WTC11 (cell line): ENCODE measurements at regions of chr1 and their contacts with region 1.

Region 1: DNA sequence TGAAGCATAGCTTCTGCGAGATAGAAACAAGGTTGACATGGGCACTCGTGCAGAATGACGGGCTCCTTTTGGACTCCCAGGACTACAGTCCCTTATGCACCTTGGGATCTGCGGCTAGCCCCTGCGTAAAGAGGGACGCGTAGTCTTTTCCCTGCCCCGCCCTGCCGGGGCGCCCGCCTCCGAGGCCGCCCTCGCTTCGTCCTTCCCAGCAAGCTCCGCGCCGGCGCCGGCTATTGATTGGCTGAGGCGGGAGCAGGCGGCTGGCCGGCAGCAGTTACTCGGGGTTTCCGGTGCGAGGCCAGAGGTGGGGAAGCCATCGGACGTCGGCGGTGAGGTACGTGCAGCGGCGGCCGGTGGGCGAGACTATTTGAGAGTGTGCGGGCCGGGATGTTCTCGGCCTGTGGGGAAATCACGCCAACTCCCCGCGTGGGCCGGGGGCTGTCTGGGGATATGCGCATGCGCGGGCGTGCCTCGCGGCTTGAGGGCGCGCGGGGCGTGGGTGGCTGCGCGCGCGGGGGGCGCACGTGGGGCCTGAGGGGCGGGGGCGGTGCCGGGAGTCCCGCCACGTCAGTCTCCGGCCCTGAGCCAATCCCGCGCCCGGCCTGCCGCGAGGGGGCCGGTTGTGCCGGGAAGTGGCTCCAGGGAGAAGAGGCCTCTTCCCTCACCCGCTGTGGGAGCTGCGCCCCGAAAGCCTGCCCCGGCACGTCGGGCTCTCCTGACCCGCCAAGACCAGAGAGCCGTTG is at the start of gene TXLNA:
- DNase-seq: peak; percentile 92
- ATAC-seq: peak; percentile 90
- H3K4me3 Mint-ChIP-seq: peak within 1 kb of the TSS; percentile 91
- H3K27ac Mint-ChIP-seq: peak within 1 kb of the TSS; percentile 92
- H3K4me1 Mint-ChIP-seq: peaks cover 34% of the 10 kb centered on the region
- H3K27me3 Mint-ChIP-seq: no peaks in the 10 kb centered on the region; the same call in 1 of the 2 replicates
- CTCF ChIP-seq: no peak
- total RNA-seq, gene TXLNA: 46.3 to 49.8 TPM (median 47.2 TPM) in 3 replicates

Region 2: GRCh38 chr1:32072622-32073298 is 106.9 kb before region 1 on chr1 and contains the start of gene TMEM39B:
- CTCF ChIA-PET with region 1: interaction called, 21 read pairs
- POLR2A ChIA-PET with region 1: interaction called, 12 read pairs
- DNase-seq: peak; percentile 95
- ATAC-seq: peak; percentile 72
- H3K4me3 Mint-ChIP-seq: peak within 1 kb of the TSS; percentile 77
- H3K27ac Mint-ChIP-seq: peak within 1 kb of the TSS; percentile 96
- H3K4me1 Mint-ChIP-seq: peaks cover 22% of the 10 kb centered on the region
- H3K27me3 Mint-ChIP-seq: no peaks in the 10 kb centered on the region; the same call in 1 of the 2 replicates
- CTCF ChIP-seq: no peak
- total RNA-seq, gene TMEM39B: 18.8 to 25.8 TPM (median 23.8 TPM) in 3 replicates

Region 3: DNA sequence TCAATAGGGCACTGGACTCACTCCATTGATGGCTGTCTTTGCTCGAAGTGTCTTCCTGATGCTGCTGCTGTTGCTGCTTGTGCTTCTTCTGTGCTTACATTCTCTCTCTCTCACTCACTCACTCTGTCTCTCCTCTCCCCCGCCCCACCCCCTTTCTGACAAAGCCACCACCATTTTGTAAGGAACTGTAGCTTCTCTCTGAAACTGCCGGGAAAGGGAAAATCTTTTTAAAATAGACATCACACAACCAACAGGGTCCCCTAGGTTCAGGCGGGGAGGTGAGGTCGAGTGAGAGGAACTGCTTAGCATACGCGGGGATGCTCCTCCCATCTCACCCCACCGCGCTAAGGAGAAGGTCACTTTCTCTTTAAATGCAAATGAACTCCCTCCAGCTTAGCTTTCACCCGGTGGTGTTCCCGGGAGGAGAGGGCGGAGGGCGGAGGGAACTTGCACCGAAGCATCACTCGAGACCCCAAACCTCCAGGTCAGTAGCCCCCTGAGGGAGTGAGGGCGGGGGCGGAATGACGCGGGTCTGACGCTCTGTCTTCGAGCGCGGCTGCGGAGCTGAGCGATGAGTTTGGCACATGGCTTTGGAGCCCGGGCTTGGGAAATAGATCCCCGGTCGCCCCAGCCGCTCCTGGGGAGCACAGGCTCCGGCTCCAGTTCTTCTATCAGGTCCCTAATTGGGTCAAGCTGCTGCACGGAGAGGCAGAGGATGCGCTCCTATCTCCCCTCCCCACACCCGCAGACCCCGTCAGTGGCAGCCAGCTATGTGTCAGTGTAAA is 20.8 kb after region 1 on chr1 and contains the start of gene CCDC28B:
- CTCF ChIA-PET with region 1: interaction called, 4 read pairs
- POLR2A ChIA-PET with region 1: interaction called, 11 read pairs
- DNase-seq: peak; percentile 71
- ATAC-seq: peak; percentile 71
- H3K4me3 Mint-ChIP-seq: peak within 1 kb of the TSS; percentile 84
- H3K27ac Mint-ChIP-seq: peak within 1 kb of the TSS; percentile 69
- H3K4me1 Mint-ChIP-seq: peaks cover 40% of the 10 kb centered on the region
- H3K27me3 Mint-ChIP-seq: peaks cover 8% of the 10 kb centered on the region
- CTCF ChIP-seq: no peak
- total RNA-seq, gene CCDC28B: 29.0 to 34.4 TPM (median 29.9 TPM) in 3 replicates